ENCODE measurements at regions of chr3 and their contacts with region 1.

Region 1: GRCh38 chr3:52253314-52254304 is 8.1 kb downstream of the PPM1M start:
- DNase-seq: no peak
- ATAC-seq: no peak
- H3K4me3 ChIP-seq: no peak overlapping the region
- H3K27ac ChIP-seq: no peak overlapping the region
- H3K4me1 ChIP-seq: 0 out of 2 replicates have a peak, but pooled peaks cover 2% of the 10 kb centered on the region
- H3K27me3 ChIP-seq: no peaks in the 10 kb centered on the region
- CTCF ChIP-seq: no peak
- POLR2A ChIP-seq: no peak
- RAD21 ChIP-seq: no peak

Region 2: DNA sequence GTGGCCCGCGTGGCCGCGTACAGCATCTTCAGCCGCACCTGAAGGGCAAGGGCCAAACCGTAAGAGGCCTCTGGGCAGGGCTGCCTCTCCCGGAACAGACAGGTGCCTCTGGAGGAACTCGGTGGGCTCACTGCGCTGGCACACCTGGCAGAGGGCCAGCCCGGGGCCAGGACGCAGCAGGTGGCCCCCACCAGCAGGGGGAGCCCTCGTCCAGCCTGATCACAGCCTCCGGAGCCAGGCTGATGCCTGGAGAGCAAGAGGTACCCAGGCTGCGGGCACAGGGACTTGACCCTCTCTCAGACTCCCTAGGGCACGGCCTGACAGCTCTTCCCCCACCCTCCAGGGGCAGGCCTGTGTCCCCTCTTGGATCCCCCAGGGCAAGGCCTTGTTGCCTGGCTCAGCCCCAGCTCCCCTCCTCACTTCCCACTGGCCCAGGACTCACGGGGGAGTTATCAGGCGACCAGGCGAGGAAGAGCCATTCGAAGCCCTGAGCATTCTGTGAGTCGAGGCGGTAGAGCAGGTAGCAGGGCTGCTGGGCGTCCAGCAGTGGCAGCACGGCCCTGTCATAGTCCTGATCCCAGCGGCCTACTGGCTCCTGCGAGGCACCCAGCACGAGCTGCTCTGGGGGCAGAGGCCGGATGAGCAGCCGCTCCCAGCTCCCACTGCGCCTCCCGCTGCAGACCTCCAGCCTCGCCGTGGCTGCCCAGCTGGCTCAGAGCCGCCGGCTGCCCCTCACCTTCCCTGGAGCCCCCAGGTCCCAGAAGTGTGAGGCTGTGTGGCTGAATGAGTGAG is 21.9 kb before region 1 on chr3:
- CTCF ChIA-PET with region 1: interaction called, 14 read pairs
- POLR2A ChIA-PET with region 1: no interaction called
- dilution Hi-C with region 1: no loop called
- in situ Hi-C with region 1: no loop called
- intact Hi-C with region 1: no loop called
- DNase-seq: peak; percentile 33
- ATAC-seq: peak; percentile 75
- H3K4me3 ChIP-seq: no peak overlapping the region
- H3K27ac ChIP-seq: no peak overlapping the region
- H3K4me1 ChIP-seq: peaks cover 6% of the 10 kb centered on the region
- H3K27me3 ChIP-seq: no peaks in the 10 kb centered on the region
- CTCF ChIP-seq: peak; percentile 79
- POLR2A ChIP-seq: no peak
- RAD21 ChIP-seq: peak; percentile 78

Region 3: GRCh38 chr3:52270252-52270754 is 16.7 kb after region 1 on chr3:
- CTCF ChIA-PET with region 1: interaction called, 3 read pairs
- POLR2A ChIA-PET with region 1: interaction called, 8 read pairs
- dilution Hi-C with region 1: no loop called
- in situ Hi-C with region 1: no loop called
- intact Hi-C with region 1: loop called (anchors 2 kb)
- DNase-seq: no peak
- ATAC-seq: no peak; the same call in 1 of the 2 replicates
- H3K4me3 ChIP-seq: no peak overlapping the region
- H3K27ac ChIP-seq: no peak overlapping the region; the same call in 1 of the 2 replicates
- H3K4me1 ChIP-seq: peaks cover 4% of the 10 kb centered on the region; the same call in 1 of the 2 replicates
- H3K27me3 ChIP-seq: no peaks in the 10 kb centered on the region
- CTCF ChIP-seq: no peak
- POLR2A ChIP-seq: no peak
- RAD21 ChIP-seq: no peak

Measured in IMR-90 (cell line).